Left ventricle myocardium superior (tissue), 1 donor: ENCODE measurements at regions of chrX and their contacts with region 1.

Region 1: DNA sequence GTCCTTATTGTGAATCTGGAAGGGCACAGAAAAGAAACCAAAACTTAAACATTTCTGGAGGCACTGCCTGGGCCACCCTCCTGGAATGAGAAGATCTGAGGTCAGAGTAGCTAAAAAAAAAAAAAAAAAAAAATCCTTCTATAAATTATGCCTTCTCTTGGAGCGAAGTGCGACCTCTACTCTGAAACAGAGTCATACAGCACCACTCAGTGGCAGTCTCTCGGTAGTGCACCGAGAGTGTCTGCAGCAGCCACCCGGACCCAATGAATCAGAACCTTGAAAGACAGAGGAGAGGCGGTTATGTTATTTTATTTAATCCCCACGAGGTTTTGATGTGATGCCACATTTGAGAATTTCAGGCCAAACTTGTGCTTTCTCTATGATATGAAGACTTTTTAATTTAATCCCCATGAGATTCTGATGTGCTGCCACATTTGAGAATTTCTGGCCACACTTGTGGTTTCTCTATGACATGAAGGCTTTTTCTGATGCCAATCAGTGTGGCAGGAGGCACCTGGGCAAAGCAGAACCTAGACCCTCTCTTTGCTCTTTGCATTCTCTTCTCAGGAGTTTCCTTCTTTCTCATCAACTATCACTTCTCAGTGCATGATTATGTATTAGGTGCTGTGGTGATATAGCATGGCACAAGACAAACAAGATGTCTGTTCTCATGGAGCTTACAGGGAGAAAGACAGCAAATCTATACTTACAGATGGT is 5.6 kb upstream of the CT47C1 start:
- DNase-seq: peak; percentile 61
- ATAC-seq: peak; percentile 75

Region 2: DNA sequence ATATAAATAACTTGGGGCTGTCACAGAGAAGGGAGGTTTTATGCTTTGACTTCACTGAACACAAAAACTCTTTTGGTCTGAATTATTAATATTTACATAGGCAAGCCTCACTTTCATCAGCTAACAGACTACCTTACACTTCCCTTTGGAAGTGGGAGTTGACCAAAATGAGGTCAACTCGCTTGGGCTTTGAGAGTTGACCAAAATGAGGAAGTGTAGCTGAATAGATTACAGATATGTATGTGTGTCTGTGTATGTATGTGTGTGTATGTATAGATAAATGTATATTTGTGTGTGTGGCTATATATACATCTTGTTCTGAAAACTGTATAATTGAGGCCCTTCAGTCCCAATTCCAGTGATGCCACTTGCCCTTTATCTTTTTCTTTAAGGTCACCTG is 453.0 kb before region 1 on chrX:
- intact Hi-C with region 1: no loop called
- DNase-seq: no peak
- ATAC-seq: no peak

Region 3: DNA sequence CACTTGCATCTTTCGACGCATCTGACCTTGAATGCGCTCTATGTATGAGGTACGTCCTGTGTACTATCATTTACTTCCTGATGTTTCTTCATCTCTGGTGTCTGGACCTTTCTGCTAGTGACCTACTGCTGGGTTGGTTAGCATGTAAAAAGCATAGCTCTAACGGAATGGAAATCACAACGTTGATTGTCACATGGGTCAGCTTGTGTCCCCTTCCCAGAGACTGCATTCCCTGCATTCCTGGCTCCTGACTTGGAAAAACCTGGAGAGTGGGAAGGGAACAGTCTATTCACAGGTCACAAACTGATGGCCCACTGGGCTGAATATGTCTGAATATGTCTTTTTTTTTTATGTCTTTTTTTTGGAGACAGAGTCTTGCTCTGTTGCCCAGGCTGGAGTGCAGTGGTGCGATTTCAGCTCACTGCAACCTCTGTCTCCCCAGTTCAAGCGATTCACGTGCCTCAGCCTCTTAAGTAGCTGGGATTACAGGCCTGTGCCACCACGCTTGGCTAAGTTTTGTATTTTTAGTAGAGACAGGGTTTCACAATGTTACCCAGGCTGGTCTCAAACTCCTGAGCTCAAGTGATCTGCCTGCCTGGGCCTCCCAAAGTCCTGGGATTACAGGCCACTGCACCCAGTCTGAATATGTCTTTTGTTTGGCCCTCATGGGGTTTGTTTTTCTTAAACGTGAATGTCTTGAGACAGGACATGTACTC is 76.5 kb before region 1 on chrX:
- intact Hi-C with region 1: no loop called
- DNase-seq: no peak
- ATAC-seq: no peak

Region 4: GRCh38 chrX:119004920-119005524 is 62.2 kb before region 1 on chrX:
- intact Hi-C with region 1: loop called (anchors 10 kb)
- DNase-seq: peak; percentile 61
- ATAC-seq: peak; percentile 68